Spleen (tissue), 13 donors: ENCODE measurements at regions of chr12 and their contacts with region 1.

Region 1: DNA sequence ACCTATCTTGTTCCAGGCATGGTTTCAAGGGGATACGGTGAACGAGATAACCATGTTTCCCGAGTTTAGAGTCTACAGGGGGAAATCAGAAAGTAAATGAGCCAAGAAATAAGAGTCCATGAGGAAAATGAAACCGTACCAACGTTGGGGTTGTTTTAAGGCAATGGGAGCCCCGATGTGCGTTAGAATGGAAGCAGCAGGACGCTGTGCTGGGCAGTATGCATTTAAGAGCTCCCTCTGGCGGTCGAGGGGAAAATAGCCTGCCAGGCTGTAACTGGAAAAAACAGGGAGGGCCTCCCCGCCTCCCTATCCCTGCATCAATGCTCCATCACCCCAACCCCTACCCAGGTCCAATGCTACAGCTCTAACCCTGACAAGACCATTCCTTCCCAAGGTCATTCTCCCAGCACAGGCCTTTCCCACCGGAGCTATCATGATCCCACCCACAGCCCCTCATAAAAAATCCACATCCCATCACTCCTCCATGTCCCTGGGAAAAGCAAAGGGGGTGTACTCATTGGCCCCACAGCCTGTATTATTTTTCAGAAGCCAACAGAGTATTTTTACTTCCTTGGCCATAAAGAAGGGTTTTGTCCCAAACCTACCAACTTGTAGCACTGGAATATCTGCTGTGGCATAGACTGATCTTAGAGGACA is 226.3 kb upstream of the NOS1 start:
- DNase-seq: no peak
- H3K4me3 ChIP-seq: no peak overlapping the region
- H3K27ac ChIP-seq: no peak overlapping the region
- H3K4me1 ChIP-seq: peaks cover 0 to 3% (median 0%) of the 10 kb centered on the region in 6 donors
- H3K27me3 ChIP-seq: peaks cover 0 to 37% (median 0%) of the 10 kb centered on the region in 7 donors
- CTCF ChIP-seq: peak; percentile 24 to 83 (median 64)
- POLR2A ChIP-seq: no peak

Region 2: GRCh38 chr12:117377744-117378143 is 210.0 kb before region 1 on chr12:
- intact Hi-C with region 1: loop called (anchors 10 kb)
- DNase-seq: no peak
- H3K4me3 ChIP-seq: no peak overlapping the region
- H3K27ac ChIP-seq: no peak overlapping the region
- H3K4me1 ChIP-seq: no peaks in the 10 kb centered on the region
- H3K27me3 ChIP-seq: peaks cover 0 to 7% (median 0%) of the 10 kb centered on the region in 7 donors
- CTCF ChIP-seq: no peak
- POLR2A ChIP-seq: no peak

Region 3: GRCh38 chr12:117640511-117640910 is 52.8 kb after region 1 on chr12:
- intact Hi-C with region 1: no loop called
- DNase-seq: no peak
- H3K4me3 ChIP-seq: no peak overlapping the region
- H3K27ac ChIP-seq: no peak overlapping the region
- H3K4me1 ChIP-seq: no peaks in the 10 kb centered on the region
- H3K27me3 ChIP-seq: no peaks in the 10 kb centered on the region
- CTCF ChIP-seq: no peak
- POLR2A ChIP-seq: no peak